ENCODE measurements at regions of chr19 and their contacts with region 1.

Region 1: DNA sequence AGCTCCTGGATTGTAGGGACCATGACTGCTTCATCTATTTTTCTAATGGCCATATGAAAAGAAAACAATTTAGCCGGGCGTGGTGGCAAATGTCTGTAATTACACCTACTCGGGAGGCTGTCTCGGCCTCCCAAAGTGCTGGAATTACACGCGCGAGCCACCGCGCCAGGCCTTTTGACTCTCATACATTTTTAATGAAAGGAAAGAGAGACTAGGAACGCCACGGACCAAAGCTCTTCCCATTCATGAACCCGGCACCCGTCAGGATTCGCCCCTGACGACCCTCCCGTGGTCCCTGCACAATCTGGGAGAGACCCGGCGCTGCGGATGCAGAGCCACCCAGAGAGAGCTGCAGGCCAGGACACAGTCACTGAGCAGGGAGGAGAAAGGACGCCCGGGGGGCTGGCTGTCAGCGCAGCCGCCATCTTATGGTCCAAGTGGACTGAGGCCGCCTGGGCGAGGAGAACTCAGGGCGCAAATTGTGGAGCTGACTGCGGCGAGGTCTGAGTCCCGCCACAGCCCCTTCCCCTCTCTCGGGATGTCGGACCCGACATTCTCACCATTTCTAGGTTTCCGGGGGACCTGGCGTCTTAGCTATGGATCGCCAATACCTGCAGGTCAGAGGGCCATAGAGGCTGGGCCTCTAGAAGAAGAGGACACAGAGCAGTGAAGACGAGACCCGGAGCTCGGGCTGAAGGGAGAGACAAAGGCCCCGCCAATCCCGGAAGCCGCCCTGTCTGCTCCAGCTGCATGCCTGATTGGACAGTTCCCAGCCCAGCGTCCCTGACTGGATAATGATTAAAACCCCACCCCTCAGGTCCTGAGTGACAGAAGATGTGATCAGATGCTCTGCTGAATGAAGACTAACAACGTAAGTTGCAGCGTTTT is at the start of gene ZNF681:
- DNase-seq: peak; percentile 86
- H3K4me3 ChIP-seq: peak within 1 kb of the TSS; percentile 70
- H3K27ac ChIP-seq: peak within 1 kb of the TSS; percentile 43
- H3K4me1 ChIP-seq: peaks cover 9% of the 10 kb centered on the region; the same call in 1 of the 2 replicates
- H3K27me3 ChIP-seq: no peaks in the 10 kb centered on the region
- CTCF ChIP-seq: no peak; the same call in 1 of the 2 replicates
- total RNA-seq, gene ZNF681: 1.9 and 2.4 TPM in 2 replicates

Region 2: GRCh38 chr19:23686621-23687423 is 71.6 kb before region 1 on chr19 and contains the start of gene ZNF675:
- CTCF ChIA-PET with region 1: no interaction called
- POLR2A ChIA-PET with region 1: interaction called, 3 read pairs
- intact Hi-C with region 1: loop called (anchors 2 kb)
- DNase-seq: peak; percentile 86 to 89
- H3K4me3 ChIP-seq: peak within 1 kb of the TSS; percentile 87
- H3K27ac ChIP-seq: peak within 1 kb of the TSS; percentile 84
- H3K4me1 ChIP-seq: peaks cover 10% of the 10 kb centered on the region
- H3K27me3 ChIP-seq: no peaks in the 10 kb centered on the region
- CTCF ChIP-seq: no peak; the same call in 1 of the 2 replicates
- total RNA-seq, gene ZNF675: 11.9 and 13.0 TPM in 2 replicates

Region 3: DNA sequence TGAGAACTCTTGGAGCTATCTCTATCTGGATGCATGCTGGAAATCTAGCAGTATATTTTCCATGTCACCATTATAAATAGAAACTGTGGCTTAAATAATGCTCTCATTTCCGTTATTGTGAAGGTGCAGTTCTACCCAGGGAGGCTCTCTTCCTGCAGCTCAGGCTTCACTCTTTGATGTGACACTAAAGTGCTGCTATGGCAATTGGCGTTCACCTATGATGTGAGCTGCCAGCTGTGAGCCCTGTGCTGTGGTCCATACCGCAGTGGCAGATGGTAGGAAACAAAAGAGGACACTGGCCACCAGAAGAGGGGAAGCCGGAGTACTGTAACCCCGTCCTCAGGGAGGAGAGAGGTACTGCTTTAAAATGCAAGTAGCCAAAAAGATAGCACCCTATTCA is 40.9 kb after region 1 on chr19:
- CTCF ChIA-PET with region 1: no interaction called
- POLR2A ChIA-PET with region 1: no interaction called
- intact Hi-C with region 1: no loop called
- DNase-seq: no peak
- H3K4me3 ChIP-seq: no peak overlapping the region
- H3K27ac ChIP-seq: no peak overlapping the region
- H3K4me1 ChIP-seq: no peaks in the 10 kb centered on the region
- H3K27me3 ChIP-seq: no peaks in the 10 kb centered on the region
- CTCF ChIP-seq: no peak

Region 4: GRCh38 chr19:23823952-23824389 is 65.5 kb after region 1 on chr19:
- CTCF ChIA-PET with region 1: no interaction called
- POLR2A ChIA-PET with region 1: no interaction called
- intact Hi-C with region 1: loop called (anchors 2 kb)
- DNase-seq: no peak
- H3K4me3 ChIP-seq: no peak overlapping the region
- H3K27ac ChIP-seq: no peak overlapping the region
- H3K4me1 ChIP-seq: peaks cover 21% of the 10 kb centered on the region
- H3K27me3 ChIP-seq: no peaks in the 10 kb centered on the region
- CTCF ChIP-seq: peak; percentile 34; the same call in 1 of the 2 replicates

Region 5: GRCh38 chr19:23876261-23876660 is 117.8 kb after region 1 on chr19:
- CTCF ChIA-PET with region 1: no interaction called
- POLR2A ChIA-PET with region 1: no interaction called
- intact Hi-C with region 1: no loop called
- DNase-seq: no peak
- H3K4me3 ChIP-seq: no peak overlapping the region
- H3K27ac ChIP-seq: no peak overlapping the region
- H3K4me1 ChIP-seq: no peaks in the 10 kb centered on the region
- H3K27me3 ChIP-seq: peaks cover 8% of the 10 kb centered on the region
- CTCF ChIP-seq: no peak

Region 6: GRCh38 chr19:23914402-23915301 is 156.2 kb after region 1 on chr19 and contains the start of gene ZNF726:
- CTCF ChIA-PET with region 1: no interaction called
- POLR2A ChIA-PET with region 1: no interaction called
- intact Hi-C with region 1: loop called (anchors 2 kb)
- DNase-seq: peak; percentile 82 to 90
- H3K4me3 ChIP-seq: peak within 1 kb of the TSS; percentile 71
- H3K27ac ChIP-seq: peak within 1 kb of the TSS; percentile 30; the same call in 1 of the 2 replicates
- H3K4me1 ChIP-seq: peaks cover 13% of the 10 kb centered on the region
- H3K27me3 ChIP-seq: no peaks in the 10 kb centered on the region
- CTCF ChIP-seq: no peak
- total RNA-seq, gene ZNF726: 7.5 and 9.3 TPM in 2 replicates

Region 7: DNA sequence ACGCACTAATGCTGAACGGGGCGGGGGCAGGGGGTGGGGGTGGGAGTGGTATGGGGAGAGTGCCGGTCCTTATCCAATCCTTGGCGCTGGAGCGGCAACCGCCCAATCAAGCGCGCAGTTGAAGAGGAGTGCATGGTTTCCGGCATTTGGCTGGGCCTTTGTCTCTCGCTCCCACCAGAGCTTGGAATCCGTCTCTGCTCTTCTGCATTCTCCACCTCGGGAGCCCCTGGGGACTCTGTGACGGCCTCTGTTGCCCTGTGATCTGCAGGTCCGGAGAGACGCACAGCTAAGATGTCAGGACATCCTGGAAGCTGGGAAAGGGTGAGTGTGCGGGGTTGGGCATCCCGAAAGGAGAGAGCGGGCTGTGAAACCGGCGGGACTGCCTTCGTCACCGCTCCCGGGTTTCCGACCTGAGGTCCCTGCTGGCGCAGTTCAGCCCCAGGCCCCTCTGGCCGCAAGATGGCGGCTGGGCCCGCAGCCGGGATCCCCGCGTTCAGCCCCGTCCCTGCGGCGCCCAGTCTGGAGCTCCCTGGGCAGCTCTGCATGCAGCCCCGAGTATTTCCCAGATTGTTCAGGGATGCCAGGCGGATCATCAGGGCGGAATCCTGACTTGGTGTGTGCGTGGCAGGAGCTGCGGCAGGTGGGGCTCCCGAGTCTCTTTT is 275.0 kb after region 1 on chr19:
- CTCF ChIA-PET with region 1: no interaction called
- POLR2A ChIA-PET with region 1: no interaction called
- intact Hi-C with region 1: loop called (anchors 10 kb)
- DNase-seq: peak; percentile 90
- H3K4me3 ChIP-seq: peak overlapping the region; percentile 92
- H3K27ac ChIP-seq: peak overlapping the region; percentile 88
- H3K4me1 ChIP-seq: peaks cover 21% of the 10 kb centered on the region
- H3K27me3 ChIP-seq: no peaks in the 10 kb centered on the region
- CTCF ChIP-seq: no peak

Region 8: DNA sequence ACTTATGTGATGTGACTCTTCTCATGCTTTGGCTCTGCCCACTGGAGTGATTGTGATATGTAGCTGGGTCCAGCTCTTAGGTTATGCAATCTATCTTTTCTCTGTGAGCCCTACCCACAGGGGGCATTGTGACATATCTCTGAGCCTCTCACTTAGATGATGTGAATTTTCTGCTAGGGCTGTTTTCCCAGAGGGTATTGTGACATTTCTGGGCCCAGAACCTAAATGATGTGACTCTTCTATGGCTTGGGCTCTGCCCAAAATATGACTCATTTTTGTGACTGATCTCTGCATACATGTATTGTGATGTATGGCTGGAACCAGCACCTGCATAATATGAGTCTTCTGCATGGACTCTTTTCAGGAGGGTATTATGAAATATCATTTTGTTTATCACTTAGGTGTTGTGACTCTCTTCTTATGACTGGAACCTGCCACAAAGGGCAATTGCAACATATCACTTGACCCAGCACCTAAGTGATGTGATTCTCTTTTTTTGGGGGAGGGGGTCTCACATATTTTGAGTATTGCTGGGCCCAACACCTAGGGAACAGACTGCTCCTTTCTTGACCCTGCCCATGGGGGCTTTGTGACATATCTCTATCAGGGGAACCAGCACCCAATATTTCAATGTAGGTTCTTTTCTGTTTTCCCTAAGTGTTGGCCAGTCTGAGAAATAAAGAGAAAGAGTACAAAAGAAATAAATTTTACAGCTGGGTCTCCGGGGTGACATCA is 316.5 kb after region 1 on chr19:
- CTCF ChIA-PET with region 1: no interaction called
- POLR2A ChIA-PET with region 1: no interaction called
- intact Hi-C with region 1: no loop called
- DNase-seq: no peak
- H3K4me3 ChIP-seq: no peak overlapping the region
- H3K27ac ChIP-seq: no peak overlapping the region
- H3K4me1 ChIP-seq: peaks cover 13% of the 10 kb centered on the region; the same call in 1 of the 2 replicates
- H3K27me3 ChIP-seq: no peaks in the 10 kb centered on the region
- CTCF ChIP-seq: no peak